ENCODE measurements at regions of chr12 and their contacts with region 1.

Region 1: GRCh38 chr12:59087077-59087673 is 166.9 kb upstream of the LRIG3 start:
- DNase-seq: peak; percentile 37
- ATAC-seq: peak; percentile 50
- H3K4me3 ChIP-seq: no peak overlapping the region
- H3K27ac ChIP-seq: no peak overlapping the region
- H3K4me1 ChIP-seq: 0 out of 2 replicates have a peak, but pooled peaks cover 4% of the 10 kb centered on the region
- H3K27me3 ChIP-seq: no peaks in the 10 kb centered on the region
- CTCF ChIP-seq: peak; percentile 78

Region 2: DNA sequence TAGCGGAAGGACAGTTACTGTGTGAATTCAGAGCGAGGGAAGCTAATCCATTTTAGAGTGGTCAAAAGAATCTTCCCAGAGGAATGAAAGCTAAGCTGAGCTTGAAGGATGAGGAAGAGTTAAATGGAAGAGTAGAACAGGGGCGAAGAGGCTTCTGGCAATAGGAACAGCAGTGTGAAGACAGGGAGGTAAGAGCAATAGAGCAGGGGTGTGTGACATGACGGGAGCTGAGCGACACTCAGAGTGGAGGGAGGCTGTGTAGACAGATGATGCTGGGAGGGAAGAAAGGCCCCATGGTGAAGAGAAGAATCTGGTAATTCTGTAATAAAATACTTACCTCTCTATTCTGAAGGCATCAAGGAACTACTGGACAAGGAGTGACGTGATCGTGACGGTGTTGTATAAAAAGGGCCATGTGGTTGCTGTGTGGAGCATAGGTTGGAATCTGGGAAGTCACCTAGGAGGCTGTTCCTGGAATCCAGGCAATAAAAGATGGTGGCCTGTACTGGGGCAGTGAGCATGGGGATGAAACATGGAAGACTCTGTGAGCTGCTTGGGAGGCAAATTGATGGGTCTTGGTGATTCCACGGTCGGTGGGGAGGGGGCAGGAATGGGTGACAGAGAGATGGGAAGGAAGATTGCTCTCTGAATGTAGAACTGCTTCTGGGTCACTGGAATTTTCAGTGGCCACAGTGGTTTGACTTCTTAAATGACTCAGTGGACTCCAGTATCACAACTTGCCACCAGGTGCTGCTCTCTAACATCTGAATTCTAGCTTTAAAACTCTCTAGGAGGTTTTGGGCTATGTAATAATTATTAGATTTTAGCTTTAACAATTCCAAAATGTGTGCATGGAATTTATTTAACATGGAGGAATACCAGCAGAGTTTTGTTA is 981.7 kb before region 1 on chr12:
- CTCF ChIA-PET with region 1: no interaction called
- POLR2A ChIA-PET with region 1: interaction called, 20 read pairs
- intact Hi-C with region 1: no loop called
- DNase-seq: peak; percentile 9
- ATAC-seq: no peak
- H3K4me3 ChIP-seq: no peak overlapping the region
- H3K27ac ChIP-seq: no peak overlapping the region
- H3K4me1 ChIP-seq: no peaks in the 10 kb centered on the region
- H3K27me3 ChIP-seq: no peaks in the 10 kb centered on the region
- CTCF ChIP-seq: peak; percentile 58

Region 3: GRCh38 chr12:58540480-58541299 is 546.5 kb before region 1 on chr12:
- CTCF ChIA-PET with region 1: interaction called, 3 read pairs
- POLR2A ChIA-PET with region 1: no interaction called
- intact Hi-C with region 1: loop called (anchors 1 kb)
- DNase-seq: peak; percentile 92
- ATAC-seq: peak; percentile 98
- H3K4me3 ChIP-seq: no peak overlapping the region
- H3K27ac ChIP-seq: peak overlapping the region; percentile 3; the same call in 1 of the 2 replicates
- H3K4me1 ChIP-seq: peaks cover 33% of the 10 kb centered on the region
- H3K27me3 ChIP-seq: no peaks in the 10 kb centered on the region
- CTCF ChIP-seq: peak; percentile 94

Region 4: DNA sequence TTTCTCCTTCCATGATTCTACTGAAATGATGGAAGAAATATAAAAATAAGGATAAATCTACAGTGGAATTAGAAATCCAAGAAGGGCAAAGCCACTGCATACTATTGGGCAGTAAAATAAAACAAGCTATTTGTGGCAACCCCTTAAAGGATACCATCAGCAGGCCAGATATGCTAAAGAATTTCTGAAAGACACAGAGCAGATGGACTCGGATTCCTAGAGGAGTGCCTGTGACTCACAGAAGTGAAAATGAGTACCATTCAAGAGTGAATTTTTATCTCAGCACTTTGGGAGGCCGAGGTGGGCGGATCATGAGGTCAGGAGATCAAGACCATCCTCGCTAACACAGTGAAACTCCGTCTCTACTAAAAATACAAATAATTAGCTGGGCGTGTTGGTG is 485.0 kb before region 1 on chr12:
- CTCF ChIA-PET with region 1: no interaction called
- POLR2A ChIA-PET with region 1: no interaction called
- intact Hi-C with region 1: no loop called
- DNase-seq: no peak
- ATAC-seq: no peak
- H3K4me3 ChIP-seq: no peak overlapping the region
- H3K27ac ChIP-seq: no peak overlapping the region
- H3K4me1 ChIP-seq: no peaks in the 10 kb centered on the region
- H3K27me3 ChIP-seq: no peaks in the 10 kb centered on the region
- CTCF ChIP-seq: no peak

Region 5: GRCh38 chr12:58833853-58834252 is 253.3 kb before region 1 on chr12:
- CTCF ChIA-PET with region 1: interaction called, 3 read pairs
- POLR2A ChIA-PET with region 1: no interaction called
- intact Hi-C with region 1: loop called (anchors 1 kb)
- DNase-seq: peak; percentile 27
- ATAC-seq: peak; percentile 33; the same call in 1 of the 2 replicates
- H3K4me3 ChIP-seq: no peak overlapping the region
- H3K27ac ChIP-seq: no peak overlapping the region
- H3K4me1 ChIP-seq: no peaks in the 10 kb centered on the region; the same call in 1 of the 2 replicates
- H3K27me3 ChIP-seq: no peaks in the 10 kb centered on the region
- CTCF ChIP-seq: peak; percentile 54

Region 6: DNA sequence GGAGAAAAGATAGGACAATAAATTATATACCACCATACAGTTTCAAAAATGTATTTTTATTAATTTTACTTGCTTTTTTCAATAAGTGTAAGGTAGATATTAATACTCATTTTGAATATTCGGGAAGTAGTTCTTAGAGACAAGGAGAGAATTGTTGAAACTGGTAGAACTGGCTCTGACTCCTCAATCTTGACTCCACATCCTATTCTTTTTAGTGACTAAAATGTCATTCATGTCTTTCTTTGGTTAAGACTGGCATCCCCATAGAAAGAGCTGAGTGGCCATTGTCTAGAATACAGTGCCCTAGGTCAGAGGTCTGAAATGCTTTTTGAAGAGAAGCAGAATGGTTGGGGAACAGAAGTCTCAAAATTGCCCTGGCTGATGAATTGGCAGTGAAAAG is 10.7 kb after region 1 on chr12:
- CTCF ChIA-PET with region 1: no interaction called
- POLR2A ChIA-PET with region 1: no interaction called
- intact Hi-C with region 1: no loop called
- DNase-seq: peak; percentile 39
- ATAC-seq: no peak
- H3K4me3 ChIP-seq: no peak overlapping the region
- H3K27ac ChIP-seq: no peak overlapping the region
- H3K4me1 ChIP-seq: 0 out of 2 replicates have a peak, but pooled peaks cover 4% of the 10 kb centered on the region
- H3K27me3 ChIP-seq: no peaks in the 10 kb centered on the region
- CTCF ChIP-seq: no peak

Region 7: GRCh38 chr12:59194794-59195193 is 107.6 kb after region 1 on chr12:
- CTCF ChIA-PET with region 1: no interaction called
- POLR2A ChIA-PET with region 1: no interaction called
- intact Hi-C with region 1: no loop called
- DNase-seq: no peak
- ATAC-seq: no peak
- H3K4me3 ChIP-seq: no peak overlapping the region
- H3K27ac ChIP-seq: no peak overlapping the region
- H3K4me1 ChIP-seq: peaks cover 7% of the 10 kb centered on the region; the same call in 1 of the 2 replicates
- H3K27me3 ChIP-seq: no peaks in the 10 kb centered on the region
- CTCF ChIP-seq: no peak